GM12878 (cell line): ENCODE measurements at regions of chr5 and their contacts with region 1.

Region 1: GRCh38 chr5:149268928-149269557 is 2.6 kb upstream of the AFAP1L1 start:
- DNase-seq: no peak
- ATAC-seq: peak; percentile 83
- H3K4me3 ChIP-seq: no peak overlapping the region
- H3K27ac ChIP-seq: no peak overlapping the region
- H3K4me1 ChIP-seq: no peaks in the 10 kb centered on the region
- H3K27me3 ChIP-seq: peaks cover 9 to 12% of the 10 kb centered on the region in 2 experiments
- CTCF ChIP-seq: peak; percentile 54 to 56 (median 55)
- EP300 ChIP-seq: no peak
- POLR2A ChIP-seq: no peak
- RAD21 ChIP-seq: peak; percentile 55

Region 2: DNA sequence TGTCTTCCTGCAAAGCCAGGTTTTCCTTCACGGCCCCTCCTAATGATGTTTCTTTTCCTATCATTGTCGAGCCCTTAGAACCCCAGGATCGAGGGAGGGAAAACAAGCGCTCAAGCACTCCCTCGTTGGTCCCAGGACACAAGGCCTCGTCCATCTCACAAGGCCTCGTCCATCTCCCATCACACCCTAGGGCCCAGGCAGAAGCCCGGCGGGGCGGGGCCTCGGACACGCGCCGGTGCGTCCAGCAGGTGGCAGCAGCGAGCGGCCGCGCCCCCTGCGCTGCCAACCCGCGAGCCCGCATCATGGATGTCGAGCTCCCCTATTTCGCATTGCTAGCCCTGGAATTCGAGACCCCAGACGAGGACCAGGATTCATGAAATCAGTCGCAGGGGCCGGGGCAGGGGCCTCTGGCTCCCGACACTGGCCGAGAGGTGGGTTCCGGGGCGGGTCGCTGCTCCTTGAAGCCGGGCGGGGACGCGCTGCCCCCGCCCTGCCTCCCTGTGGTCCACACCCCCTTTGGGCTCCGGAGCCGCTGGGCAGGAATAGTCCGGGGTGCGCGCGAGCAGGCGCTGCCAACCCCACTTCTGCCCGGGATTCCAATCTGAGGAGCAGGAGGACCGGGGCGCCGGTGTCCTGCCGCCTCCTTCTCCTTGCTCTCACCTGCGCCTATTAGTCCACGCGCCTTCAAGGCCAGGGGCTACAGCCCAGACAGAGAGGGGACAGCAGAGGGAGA is 127.7 kb before region 1 on chr5 and contains the start of gene ABLIM3:
- CTCF ChIA-PET with region 1: no interaction called
- POLR2A ChIA-PET with region 1: no interaction called
- RAD21 ChIA-PET with region 1: no interaction called
- SMC1A ChIA-PET with region 1: no interaction called
- in situ Hi-C with region 1: no loop called
- intact Hi-C with region 1: loop called (anchors 5 kb)
- DNase-seq: no peak
- ATAC-seq: peak; percentile 99
- H3K4me3 ChIP-seq: peak within 1 kb of the TSS; percentile 57; the same call in 1 of the 2 replicates
- H3K27ac ChIP-seq: no peak within 1 kb of the TSS
- H3K4me1 ChIP-seq: 0 out of 2 replicates have a peak, but pooled peaks cover 3% of the 10 kb centered on the region
- H3K27me3 ChIP-seq: peaks cover 2 to 5% of the 10 kb centered on the region in 2 experiments; a peak in 2 of 4 replicates
- CTCF ChIP-seq: peak; percentile 66 to 77 (median 74)
- EP300 ChIP-seq: no peak
- POLR2A ChIP-seq: no peak
- RAD21 ChIP-seq: 0 out of 2 replicates have a peak, but pooled peaks have one; percentile 32
- polyA plus RNA-seq, gene ABLIM3: not detected

Region 3: GRCh38 chr5:149392718-149393117 is 123.7 kb after region 1 on chr5:
- CTCF ChIA-PET with region 1: no interaction called
- POLR2A ChIA-PET with region 1: no interaction called
- RAD21 ChIA-PET with region 1: no interaction called
- SMC1A ChIA-PET with region 1: no interaction called
- in situ Hi-C with region 1: no loop called
- intact Hi-C with region 1: no loop called
- DNase-seq: no peak
- ATAC-seq: peak; percentile 80
- H3K4me3 ChIP-seq: no peak overlapping the region
- H3K27ac ChIP-seq: no peak overlapping the region
- H3K4me1 ChIP-seq: no peaks in the 10 kb centered on the region
- H3K27me3 ChIP-seq: peaks cover 2% of the 10 kb centered on the region in 2 experiments; a peak in 2 of 4 replicates
- CTCF ChIP-seq: no peak
- EP300 ChIP-seq: peak in 1 of 2 experiments; percentile 59; a peak in 1 of 4 replicates
- POLR2A ChIP-seq: no peak
- RAD21 ChIP-seq: no peak